Heart left ventricle (tissue), 16 donors: ENCODE measurements at regions of chr9 and their contacts with region 1.

Region 1: GRCh38 chr9:28051559-28052503 is 478.6 kb upstream of the C9orf72 start:
- DNase-seq: no peak
- ATAC-seq: no peak
- H3K4me3 ChIP-seq: no peak overlapping the region
- H3K27ac ChIP-seq: no peak overlapping the region
- H3K4me1 ChIP-seq: no peaks in the 10 kb centered on the region
- H3K27me3 ChIP-seq: no peaks in the 10 kb centered on the region
- CTCF ChIP-seq: no peak
- POLR2A ChIP-seq: no peak

Region 2: DNA sequence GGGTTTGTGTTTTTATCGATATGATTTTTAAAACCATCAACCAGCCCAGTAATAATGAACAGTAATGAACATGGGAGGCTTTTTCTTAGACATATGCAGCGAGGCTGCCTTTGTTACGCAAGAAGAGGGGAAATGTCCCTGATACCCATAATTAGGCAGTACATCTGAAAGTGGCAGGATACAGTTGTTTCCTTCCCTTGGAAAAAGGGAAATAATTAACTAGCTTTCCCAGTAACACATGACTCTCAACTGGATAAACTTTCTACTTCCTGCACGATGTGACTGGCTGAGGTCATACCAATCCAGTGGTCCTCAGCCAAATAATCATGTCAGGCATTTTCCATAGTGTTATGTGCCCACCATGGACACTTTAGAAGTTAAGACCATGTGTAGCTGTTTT is 46.9 kb before region 1 on chr9:
- intact Hi-C with region 1: loop called in 1 of 10 experiments (anchors 10 kb)
- DNase-seq: no peak
- ATAC-seq: no peak
- H3K4me3 ChIP-seq: no peak overlapping the region
- H3K27ac ChIP-seq: no peak overlapping the region
- H3K4me1 ChIP-seq: no peaks in the 10 kb centered on the region
- H3K27me3 ChIP-seq: no peaks in the 10 kb centered on the region
- CTCF ChIP-seq: no peak
- POLR2A ChIP-seq: no peak